ENCODE measurements at regions of chr5 and their contacts with region 1.

Region 1: DNA sequence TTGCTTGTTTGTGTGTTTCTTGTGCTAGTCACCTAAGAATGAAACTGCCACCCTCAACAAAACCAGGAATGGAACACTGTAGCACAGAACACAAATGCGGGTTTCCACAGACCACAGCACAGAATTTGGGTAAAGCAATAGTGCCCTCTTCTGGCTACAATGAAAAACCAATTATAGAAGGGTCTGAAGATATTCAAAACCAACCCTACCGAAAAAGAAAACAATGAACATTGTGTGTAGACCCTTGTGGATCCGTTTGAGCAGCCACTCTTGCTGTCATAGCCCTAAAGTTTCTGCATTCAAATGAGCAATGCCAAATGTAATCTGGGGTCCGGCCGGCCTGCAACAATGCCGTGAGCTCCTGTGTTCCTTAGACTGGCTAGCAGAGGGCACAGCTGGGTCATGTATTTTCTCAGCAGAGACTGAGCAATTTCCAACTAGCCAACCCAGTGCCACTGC is 8.3 kb upstream of the ENC1 start:
- DNase-seq: no peak
- H3K4me3 ChIP-seq: no peak overlapping the region
- H3K27ac ChIP-seq: no peak overlapping the region
- H3K4me1 ChIP-seq: peaks cover 0 to 2% (median 0%) of the 10 kb centered on the region in 4 experiments; a peak in 1 of 7 replicates
- H3K27me3 ChIP-seq: no peaks in the 10 kb centered on the region
- CTCF ChIP-seq: peak in 2 of 3 experiments; percentile 68 to 70; a peak in 3 of 4 replicates
- EP300 ChIP-seq: no peak
- POLR2A ChIP-seq: no peak
- RAD21 ChIP-seq: peak; percentile 95

Region 2: DNA sequence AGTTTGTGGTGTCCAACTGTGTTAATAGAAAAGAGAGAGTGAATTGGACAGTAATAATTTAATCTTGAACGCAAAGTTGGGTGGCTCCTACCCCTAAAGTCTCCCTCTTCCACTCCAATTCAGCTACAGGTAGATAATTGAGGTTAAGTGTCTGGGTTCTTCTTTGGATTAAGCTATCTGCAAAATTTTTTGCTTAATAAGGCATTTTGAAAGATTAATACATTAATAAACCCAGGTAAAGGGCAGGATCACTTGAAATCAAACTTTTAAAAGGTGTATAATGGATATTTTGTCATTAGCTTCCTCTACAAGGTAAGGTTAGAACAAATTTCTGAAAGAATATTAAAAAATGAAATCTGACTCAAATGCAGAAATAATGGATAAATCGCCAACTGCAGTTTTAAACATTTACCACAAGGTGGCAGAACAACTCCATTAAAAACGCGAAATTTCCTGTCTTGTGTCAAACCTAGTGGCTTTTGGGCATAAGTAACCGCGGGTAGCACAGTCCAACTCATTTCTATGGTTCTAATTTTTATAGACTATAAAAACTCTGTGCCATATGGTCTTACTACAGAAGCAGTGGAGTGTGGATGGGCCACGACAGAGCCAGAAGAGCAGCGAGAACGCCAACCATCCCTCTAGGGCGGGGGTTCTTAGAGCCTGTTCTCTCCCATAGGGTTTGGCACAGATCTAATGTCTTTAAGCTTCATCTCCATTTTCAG is 746.4 kb before region 1 on chr5:
- CTCF ChIA-PET with region 1: interaction called, 17 read pairs
- POLR2A ChIA-PET with region 1: no interaction called
- DNase-seq: peak in 1 of 2 experiments; percentile 21
- H3K4me3 ChIP-seq: no peak overlapping the region
- H3K27ac ChIP-seq: no peak overlapping the region
- H3K4me1 ChIP-seq: no peaks in the 10 kb centered on the region
- H3K27me3 ChIP-seq: no peaks in the 10 kb centered on the region
- CTCF ChIP-seq: peak in 2 of 3 experiments; percentile 58 to 68; a peak in 3 of 4 replicates
- EP300 ChIP-seq: no peak
- POLR2A ChIP-seq: no peak
- RAD21 ChIP-seq: peak; percentile 85 to 89